IMR-90 (cell line): ENCODE measurements at regions of chr1 and their contacts with region 1.

Region 1: DNA sequence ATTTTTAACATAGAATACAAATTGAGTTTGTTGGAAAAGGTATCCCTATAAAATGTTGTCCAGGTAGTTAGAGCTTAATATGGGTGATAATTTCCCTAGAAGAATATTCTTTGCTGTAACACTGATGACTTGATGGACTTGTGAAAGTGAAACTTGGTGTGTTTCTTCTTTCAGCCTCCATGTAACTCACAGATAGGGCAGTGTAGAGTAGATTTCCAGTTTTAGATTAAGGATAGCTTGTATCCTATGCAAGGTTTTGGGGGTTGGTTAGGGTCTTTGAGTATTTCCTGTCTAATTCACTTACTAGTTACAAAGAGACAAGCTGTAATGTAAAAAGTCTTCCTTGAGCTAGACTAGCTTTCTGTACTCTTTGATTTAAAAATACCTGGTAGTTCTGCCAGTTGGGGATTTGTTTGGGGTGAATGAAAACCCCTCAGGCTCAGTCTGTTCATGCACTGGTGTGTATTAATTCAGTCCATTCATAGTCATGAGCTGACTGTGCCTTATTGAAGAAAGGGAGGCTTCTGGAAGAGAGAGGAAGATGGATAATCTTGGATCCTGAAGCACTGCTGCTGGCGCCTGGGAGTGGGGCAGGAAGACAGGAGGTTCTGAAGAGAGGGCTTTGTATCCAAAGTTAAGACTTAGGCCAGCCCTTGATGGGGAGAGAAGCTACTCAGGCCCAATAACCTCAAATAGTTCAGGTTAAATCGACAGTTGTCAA is 83.6 kb downstream of the CAMTA1 start:
- DNase-seq: no peak
- ATAC-seq: peak; percentile 30
- H3K4me3 ChIP-seq: no peak overlapping the region
- H3K27ac ChIP-seq: no peak overlapping the region
- H3K4me1 ChIP-seq: peaks cover 21% of the 10 kb centered on the region
- H3K27me3 ChIP-seq: no peaks in the 10 kb centered on the region
- CTCF ChIP-seq: no peak
- POLR2A ChIP-seq: no peak
- RAD21 ChIP-seq: no peak

Region 2: DNA sequence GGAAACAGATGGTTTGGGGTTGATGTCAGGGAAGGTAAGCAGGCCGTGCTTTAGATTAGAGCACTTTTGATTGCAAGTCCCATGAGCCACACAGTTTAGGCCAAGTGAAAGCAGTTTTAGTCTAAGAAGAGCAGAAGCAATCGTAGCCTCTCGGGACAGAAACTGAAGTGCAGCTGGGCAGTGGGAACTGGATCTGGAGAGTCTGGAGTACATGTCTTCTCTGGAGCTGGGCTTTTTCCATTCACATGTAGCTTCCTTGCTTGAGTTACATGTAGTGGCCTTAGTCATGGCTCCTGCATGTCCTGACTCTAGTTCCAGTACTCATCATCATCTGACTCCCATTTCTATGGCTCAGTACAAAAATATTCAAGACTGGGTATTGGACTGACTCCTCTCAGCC is 66.9 kb before region 1 on chr1:
- CTCF ChIA-PET with region 1: interaction called, 5 read pairs
- POLR2A ChIA-PET with region 1: no interaction called
- dilution Hi-C with region 1: no loop called
- in situ Hi-C with region 1: no loop called
- intact Hi-C with region 1: loop called (anchors 5 kb)
- DNase-seq: peak; percentile 81
- ATAC-seq: peak; percentile 33
- H3K4me3 ChIP-seq: no peak overlapping the region
- H3K27ac ChIP-seq: peak overlapping the region; percentile 73
- H3K4me1 ChIP-seq: peaks cover 35% of the 10 kb centered on the region
- H3K27me3 ChIP-seq: no peaks in the 10 kb centered on the region
- CTCF ChIP-seq: no peak
- POLR2A ChIP-seq: no peak
- RAD21 ChIP-seq: no peak

Region 3: GRCh38 chr1:6832531-6833188 is 36.2 kb before region 1 on chr1:
- CTCF ChIA-PET with region 1: no interaction called
- POLR2A ChIA-PET with region 1: interaction called, 7 read pairs
- dilution Hi-C with region 1: no loop called
- in situ Hi-C with region 1: no loop called
- intact Hi-C with region 1: loop called (anchors 5 kb)
- DNase-seq: no peak
- ATAC-seq: no peak
- H3K4me3 ChIP-seq: no peak overlapping the region
- H3K27ac ChIP-seq: no peak overlapping the region
- H3K4me1 ChIP-seq: peaks cover 2% of the 10 kb centered on the region; the same call in 1 of the 2 replicates
- H3K27me3 ChIP-seq: no peaks in the 10 kb centered on the region
- CTCF ChIP-seq: no peak
- POLR2A ChIP-seq: no peak
- RAD21 ChIP-seq: no peak